ENCODE measurements at regions of chr16 and their contacts with region 1.

Region 1: GRCh38 chr16:813204-813915 is 12.8 kb upstream of the GNG13 start:
- DNase-seq: peak; percentile 72
- ATAC-seq: peak; percentile 90
- H3K4me3 Mint-ChIP-seq: no peak overlapping the region
- H3K27ac Mint-ChIP-seq: no peak overlapping the region
- H3K4me1 Mint-ChIP-seq: peaks cover 6% of the 10 kb centered on the region
- H3K27me3 Mint-ChIP-seq: peaks cover 15% of the 10 kb centered on the region
- CTCF ChIP-seq: peak; percentile 76

Region 2: DNA sequence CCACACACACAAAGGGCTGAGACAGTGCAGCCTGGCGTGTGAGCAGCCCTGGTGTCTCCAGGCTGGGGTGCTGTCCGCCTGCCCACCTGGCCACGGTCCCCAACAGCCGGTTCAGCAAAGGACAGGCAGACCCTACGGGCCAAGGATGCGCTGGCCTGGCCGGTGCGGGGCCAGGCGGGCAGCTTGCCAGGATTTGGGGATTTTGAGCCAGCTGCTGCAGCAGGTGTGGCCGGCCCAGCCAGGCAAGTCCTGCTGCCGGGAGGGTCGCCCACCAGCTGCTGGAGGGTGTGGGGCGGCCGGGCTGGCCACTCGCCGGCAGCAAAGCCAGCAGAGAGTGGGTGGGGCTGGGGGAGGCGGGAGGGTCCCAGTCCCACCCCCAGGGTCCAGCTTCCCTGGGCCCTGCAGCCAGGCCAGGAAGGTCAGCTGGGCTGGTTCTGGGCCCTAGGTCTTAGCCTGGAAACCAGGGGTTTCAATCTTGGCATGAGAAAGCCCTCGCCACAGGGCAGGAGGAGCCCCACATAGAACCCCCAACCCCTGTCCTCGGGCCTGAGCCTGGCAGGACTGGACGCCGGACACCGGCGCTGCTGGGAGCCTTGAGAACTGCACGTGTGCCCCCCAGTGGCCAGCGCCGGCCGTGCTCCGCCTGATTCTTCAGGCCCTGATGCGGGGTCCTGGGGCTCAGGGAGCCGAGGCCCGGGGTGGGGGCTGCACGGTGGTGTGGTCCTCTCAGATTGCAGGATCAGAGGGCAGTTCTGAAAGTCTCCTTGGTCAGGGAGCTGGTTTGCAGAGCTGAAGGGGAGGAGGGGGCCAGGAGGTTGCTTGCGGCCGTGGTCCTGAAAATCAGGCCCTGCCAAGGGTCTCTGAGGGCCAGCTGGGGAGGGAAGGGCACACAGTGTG is 241.5 kb after region 1 on chr16:
- CTCF ChIA-PET with region 1: interaction called, 5 read pairs
- POLR2A ChIA-PET with region 1: no interaction called
- intact Hi-C with region 1: loop called (anchors 10 kb)
- DNase-seq: peak; percentile 61
- ATAC-seq: peak; percentile 57
- H3K4me3 Mint-ChIP-seq: no peak overlapping the region
- H3K27ac Mint-ChIP-seq: no peak overlapping the region
- H3K4me1 Mint-ChIP-seq: no peaks in the 10 kb centered on the region
- H3K27me3 Mint-ChIP-seq: no peaks in the 10 kb centered on the region
- CTCF ChIP-seq: peak; percentile 97

Measured in activated CD8-positive, alpha-beta T cell treated with anti-CD3 and anti-CD28 coated beads for 36 hours (primary cell).